Activated CD4-positive, alpha-beta T cell treated with anti-CD3 and anti-CD28 coated beads for 36 hours (primary cell): ENCODE measurements at regions of chr5 and their contacts with region 1.

Region 1: DNA sequence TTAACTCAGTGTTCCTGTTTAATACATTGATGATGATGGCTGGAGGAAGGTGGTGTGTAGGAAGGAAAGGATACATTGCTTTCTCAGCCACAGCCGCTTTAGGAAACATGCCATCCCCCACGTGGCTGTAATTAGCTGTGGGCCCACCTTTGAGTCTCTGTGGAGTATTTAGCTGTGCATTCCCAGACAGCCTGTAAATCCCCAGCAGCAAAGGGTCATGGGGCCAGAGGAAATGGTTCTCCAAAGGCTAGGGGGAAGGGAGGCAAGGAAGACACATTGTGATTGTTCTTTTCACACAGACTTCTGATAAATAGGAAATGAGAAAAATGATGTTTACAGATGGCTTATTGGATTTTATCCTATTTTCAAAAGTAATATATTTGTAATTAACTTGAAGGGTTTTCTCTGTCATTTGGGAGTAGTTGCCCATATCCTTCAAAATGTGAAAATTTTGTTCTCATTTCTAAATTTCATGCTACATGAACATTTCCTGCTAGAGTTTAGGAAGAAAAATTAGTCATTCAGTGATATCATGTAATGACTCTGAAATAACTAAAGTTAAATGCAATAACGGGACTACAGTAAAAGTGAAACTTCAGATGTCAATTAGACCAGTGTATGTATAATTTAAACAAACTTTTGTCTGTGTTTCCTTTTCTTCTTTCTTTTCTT is 24.3 kb upstream of the F2R start:
- DNase-seq: no peak
- ATAC-seq: peak; percentile 95
- H3K4me3 Mint-ChIP-seq: peak overlapping the region; percentile 28
- H3K27ac Mint-ChIP-seq: peak overlapping the region; percentile 63
- H3K4me1 Mint-ChIP-seq: peaks cover 23% of the 10 kb centered on the region
- H3K27me3 Mint-ChIP-seq: no peaks in the 10 kb centered on the region

Region 2: GRCh38 chr5:76041863-76042262 is 649.7 kb before region 1 on chr5:
- CTCF ChIA-PET with region 1: no interaction called
- POLR2A ChIA-PET with region 1: no interaction called
- intact Hi-C with region 1: no loop called
- DNase-seq: peak; percentile 30
- ATAC-seq: no peak
- H3K4me3 Mint-ChIP-seq: no peak overlapping the region
- H3K27ac Mint-ChIP-seq: no peak overlapping the region
- H3K4me1 Mint-ChIP-seq: peaks cover 8% of the 10 kb centered on the region
- H3K27me3 Mint-ChIP-seq: peaks cover 16% of the 10 kb centered on the region

Region 3: GRCh38 chr5:76715736-76716455 is 24.3 kb after region 1 on chr5 and contains the start of gene F2R:
- CTCF ChIA-PET with region 1: interaction called, 3 read pairs
- POLR2A ChIA-PET with region 1: no interaction called
- intact Hi-C with region 1: loop called in 1 of 2 experiments (anchors 2 kb)
- DNase-seq: peak; percentile 72
- ATAC-seq: peak; percentile 79
- H3K4me3 Mint-ChIP-seq: peak within 1 kb of the TSS; percentile 75
- H3K27ac Mint-ChIP-seq: no peak within 1 kb of the TSS
- H3K4me1 Mint-ChIP-seq: peaks cover 22% of the 10 kb centered on the region
- H3K27me3 Mint-ChIP-seq: peaks cover 38% of the 10 kb centered on the region
- total RNA-seq, gene F2R: 1.4 TPM

Region 4: DNA sequence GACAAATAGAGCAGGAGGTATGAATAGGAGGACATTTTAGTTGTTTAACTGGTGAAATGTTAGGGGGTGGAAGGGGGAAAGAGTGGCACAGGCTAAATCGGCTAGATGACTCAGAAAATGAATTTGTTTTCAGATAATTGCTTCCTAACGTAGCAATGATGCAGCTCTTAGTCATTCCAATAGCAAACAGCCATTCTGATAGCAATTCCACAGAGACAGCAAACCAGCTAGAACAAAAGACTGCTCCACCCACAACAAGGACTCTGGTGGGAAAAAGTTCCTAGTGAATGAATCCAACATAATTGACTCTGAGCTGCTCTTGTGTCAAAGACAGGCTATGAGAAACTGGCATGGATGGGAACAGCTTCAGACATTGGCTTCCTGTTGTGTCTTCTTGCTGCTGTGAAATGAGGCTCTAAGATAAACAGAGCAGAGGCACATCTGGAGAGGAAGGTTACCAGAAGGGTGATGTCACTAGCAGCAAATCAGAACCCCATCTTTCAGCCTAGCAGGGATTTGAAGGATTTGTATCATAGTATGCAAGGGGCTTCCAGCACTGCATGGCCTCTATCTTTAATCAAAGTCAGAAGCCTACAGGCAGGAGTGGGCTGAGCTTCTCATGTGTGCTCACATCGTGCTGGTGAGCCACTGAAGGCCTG is 99.2 kb after region 1 on chr5:
- CTCF ChIA-PET with region 1: no interaction called
- POLR2A ChIA-PET with region 1: no interaction called
- intact Hi-C with region 1: loop called in 1 of 2 experiments (anchors 5 kb)
- DNase-seq: peak; percentile 24
- ATAC-seq: peak; percentile 87
- H3K4me3 Mint-ChIP-seq: no peak overlapping the region
- H3K27ac Mint-ChIP-seq: peak overlapping the region; percentile 59
- H3K4me1 Mint-ChIP-seq: peaks cover 21% of the 10 kb centered on the region
- H3K27me3 Mint-ChIP-seq: no peaks in the 10 kb centered on the region

Region 5: DNA sequence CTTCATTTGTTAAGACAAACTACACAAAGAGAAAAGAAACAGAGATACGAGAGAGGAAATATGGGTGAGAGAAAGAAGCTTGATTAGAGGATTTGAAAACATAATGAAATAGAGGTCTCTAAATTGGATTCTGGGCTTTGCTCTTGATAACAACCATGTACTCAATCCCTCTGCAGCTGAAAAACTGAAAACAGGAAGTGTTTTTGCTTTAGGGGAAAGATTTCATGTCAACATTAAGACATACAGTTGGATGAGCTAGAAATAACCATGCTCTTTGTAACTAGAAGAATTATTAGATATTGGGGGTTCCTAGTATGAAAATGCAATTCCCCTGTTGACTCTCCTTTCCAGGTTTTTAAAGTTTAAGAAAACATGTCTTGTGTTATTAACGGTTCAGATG is 283.2 kb after region 1 on chr5:
- CTCF ChIA-PET with region 1: no interaction called
- POLR2A ChIA-PET with region 1: no interaction called
- intact Hi-C with region 1: no loop called
- DNase-seq: no peak
- ATAC-seq: no peak
- H3K4me3 Mint-ChIP-seq: no peak overlapping the region
- H3K27ac Mint-ChIP-seq: no peak overlapping the region
- H3K4me1 Mint-ChIP-seq: no peaks in the 10 kb centered on the region
- H3K27me3 Mint-ChIP-seq: peaks cover 9% of the 10 kb centered on the region